ENCODE measurements at regions of chr10 and their contacts with region 1.

Region 1: GRCh38 chr10:60728056-60728455 is 50.2 kb upstream of the CDK1 start:
- DNase-seq: no peak
- H3K4me3 Mint-ChIP-seq: peak overlapping the region; percentile 70
- H3K27ac Mint-ChIP-seq: peak overlapping the region; percentile 83
- H3K4me1 Mint-ChIP-seq: peaks cover 70% of the 10 kb centered on the region
- H3K27me3 Mint-ChIP-seq: peaks cover 2% of the 10 kb centered on the region

Region 2: DNA sequence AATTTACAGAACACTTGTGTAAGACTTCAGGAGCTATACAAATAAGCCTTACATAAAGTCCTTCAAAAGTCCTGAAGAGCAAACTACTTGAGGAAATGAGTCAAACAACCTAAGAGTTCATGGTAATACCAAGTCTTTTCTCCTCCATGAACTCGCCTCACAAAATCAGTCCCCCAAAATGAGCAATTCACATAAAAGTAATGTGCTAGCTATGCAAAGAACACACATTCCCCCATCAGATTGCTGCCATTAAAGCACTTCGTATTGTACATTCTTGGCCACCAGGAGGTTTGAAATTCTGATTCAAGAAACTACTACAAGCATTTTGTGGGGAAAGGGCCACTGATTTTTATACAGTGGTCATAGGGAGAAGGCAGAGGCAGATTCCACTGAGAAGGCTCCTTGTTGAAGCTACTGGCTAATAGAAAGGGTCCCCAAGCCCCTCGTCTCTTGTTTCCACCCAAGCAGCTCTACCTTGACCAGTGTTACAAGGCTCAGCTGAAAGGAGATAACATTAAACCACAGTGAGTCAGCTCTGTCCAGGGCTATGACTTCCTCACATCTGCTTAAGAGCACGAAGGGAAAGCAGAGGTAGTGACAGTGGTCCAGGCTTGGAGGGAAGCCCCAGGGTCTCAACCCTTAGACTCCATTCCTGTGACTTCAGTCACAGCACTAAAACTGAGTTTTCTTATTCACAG is 65.0 kb before region 1 on chr10:
- CTCF ChIA-PET with region 1: no interaction called
- POLR2A ChIA-PET with region 1: no interaction called
- intact Hi-C with region 1: loop called (anchors 2 kb)
- DNase-seq: no peak
- H3K4me3 Mint-ChIP-seq: no peak overlapping the region
- H3K27ac Mint-ChIP-seq: no peak overlapping the region
- H3K4me1 Mint-ChIP-seq: peaks cover 45% of the 10 kb centered on the region
- H3K27me3 Mint-ChIP-seq: peaks cover 3% of the 10 kb centered on the region

Region 3: GRCh38 chr10:60714233-60714632 is 13.8 kb before region 1 on chr10:
- CTCF ChIA-PET with region 1: interaction called, 7 read pairs
- POLR2A ChIA-PET with region 1: interaction called, 5 read pairs
- intact Hi-C with region 1: loop called (anchors 2 kb)
- DNase-seq: no peak
- H3K4me3 Mint-ChIP-seq: peak overlapping the region; percentile 4
- H3K27ac Mint-ChIP-seq: peak overlapping the region; percentile 7
- H3K4me1 Mint-ChIP-seq: peaks cover 47% of the 10 kb centered on the region
- H3K27me3 Mint-ChIP-seq: no peaks in the 10 kb centered on the region

Measured in activated CD4-positive, alpha-beta memory T cell treated with anti-CD3 and anti-CD28 coated beads for 36 hours (primary cell).